OCI-LY7 (cell line): ENCODE measurements at regions of chr21 and their contacts with region 1.

Region 1: GRCh38 chr21:41068967-41069642 is 98.9 kb upstream of the BACE2 start:
- DNase-seq: peak; percentile 34
- H3K4me3 ChIP-seq: no peak overlapping the region
- H3K27ac ChIP-seq: no peak overlapping the region
- H3K4me1 ChIP-seq: no peaks in the 10 kb centered on the region
- CTCF ChIP-seq: peak; percentile 81

Region 2: DNA sequence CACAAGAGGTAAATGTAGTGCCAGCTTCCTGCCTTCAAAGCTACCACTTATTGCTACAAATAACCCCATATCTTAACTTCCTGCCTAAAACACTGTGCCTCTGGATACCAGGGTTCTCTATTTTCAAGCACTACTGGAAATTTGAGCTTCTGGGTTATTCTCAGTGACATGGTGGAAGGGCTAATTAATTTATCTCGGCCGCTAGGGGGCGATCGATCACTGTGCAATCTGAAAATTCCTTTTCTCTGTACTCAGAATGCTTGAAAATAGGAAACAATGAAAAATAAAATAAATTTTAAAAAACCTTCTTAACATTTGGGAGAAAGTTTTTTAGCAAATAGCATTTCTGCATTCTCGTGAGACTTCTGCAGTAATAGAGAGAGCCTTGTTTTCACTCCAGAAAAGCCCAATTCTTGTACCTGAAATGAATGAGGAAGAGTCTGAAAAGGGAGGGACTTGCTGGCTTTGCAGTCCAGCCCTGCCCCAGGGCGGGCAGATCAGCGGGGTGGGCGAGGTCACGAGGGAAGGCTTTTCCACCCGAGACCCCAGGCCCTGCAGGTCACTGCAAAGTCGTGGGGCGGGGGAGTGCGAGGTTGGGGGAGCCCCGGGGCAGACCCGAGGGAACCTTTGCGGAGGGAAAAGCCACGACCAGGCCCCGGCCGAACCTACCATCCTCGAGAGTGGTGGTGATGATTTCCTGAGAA is 925.1 kb before region 1 on chr21:
- CTCF ChIA-PET with region 1: no interaction called
- POLR2A ChIA-PET with region 1: no interaction called
- intact Hi-C with region 1: loop called (anchors 5 kb)
- DNase-seq: peak; percentile 51
- H3K4me3 ChIP-seq: no peak overlapping the region
- H3K27ac ChIP-seq: no peak overlapping the region
- H3K4me1 ChIP-seq: no peaks in the 10 kb centered on the region
- CTCF ChIP-seq: peak; percentile 96